Vagina (tissue), 2 donors: ENCODE measurements at regions of chr5 and their contacts with region 1.

Region 1: GRCh38 chr5:15383469-15383868 is 116.5 kb upstream of the FBXL7 start:
- DNase-seq: no peak
- H3K4me3 ChIP-seq: no peak overlapping the region
- H3K27ac ChIP-seq: no peak overlapping the region
- H3K4me1 ChIP-seq: no peaks in the 10 kb centered on the region
- H3K27me3 ChIP-seq: no peaks in the 10 kb centered on the region
- CTCF ChIP-seq: peak in 1 of 3 experiments; percentile 23
- POLR2A ChIP-seq: no peak

Region 2: GRCh38 chr5:15821506-15821905 is 438.0 kb after region 1 on chr5:
- intact Hi-C with region 1: loop called (anchors 10 kb)
- DNase-seq: no peak
- H3K4me3 ChIP-seq: no peak overlapping the region
- H3K27ac ChIP-seq: no peak overlapping the region
- H3K4me1 ChIP-seq: no peaks in the 10 kb centered on the region
- H3K27me3 ChIP-seq: no peaks in the 10 kb centered on the region
- CTCF ChIP-seq: no peak
- POLR2A ChIP-seq: no peak